ENCODE measurements at regions of chr10 and their contacts with region 1.

Region 1: GRCh38 chr10:66925896-66926715 is at the start of gene LRRTM3:
- DNase-seq: peak; percentile 70
- H3K4me3 ChIP-seq: no peak within 1 kb of the TSS
- H3K27ac ChIP-seq: no peak within 1 kb of the TSS
- H3K4me1 ChIP-seq: no peaks in the 10 kb centered on the region
- H3K27me3 ChIP-seq: peaks cover 17% of the 10 kb centered on the region
- CTCF ChIP-seq: peak; percentile 79
- total RNA-seq, gene LRRTM3: not detected

Region 2: GRCh38 chr10:66307826-66308225 is 618.3 kb before region 1 on chr10:
- CTCF ChIA-PET with region 1: no interaction called
- dilution Hi-C with region 1: no loop called
- in situ Hi-C with region 1: no loop called
- intact Hi-C with region 1: loop called (anchors 5 kb)
- DNase-seq: no peak
- H3K4me3 ChIP-seq: no peak overlapping the region
- H3K27ac ChIP-seq: no peak overlapping the region
- H3K4me1 ChIP-seq: no peaks in the 10 kb centered on the region
- H3K27me3 ChIP-seq: no peaks in the 10 kb centered on the region
- CTCF ChIP-seq: peak in 1 of 2 donors; percentile 26

Region 3: GRCh38 chr10:66455304-66455703 is 470.8 kb before region 1 on chr10:
- CTCF ChIA-PET with region 1: no interaction called
- dilution Hi-C with region 1: no loop called
- in situ Hi-C with region 1: no loop called
- intact Hi-C with region 1: loop called (anchors 5 kb)
- DNase-seq: peak; percentile 2
- H3K4me3 ChIP-seq: no peak overlapping the region
- H3K27ac ChIP-seq: no peak overlapping the region
- H3K4me1 ChIP-seq: no peaks in the 10 kb centered on the region
- H3K27me3 ChIP-seq: peaks cover 1% of the 10 kb centered on the region
- CTCF ChIP-seq: peak; percentile 30 to 63

Region 4: DNA sequence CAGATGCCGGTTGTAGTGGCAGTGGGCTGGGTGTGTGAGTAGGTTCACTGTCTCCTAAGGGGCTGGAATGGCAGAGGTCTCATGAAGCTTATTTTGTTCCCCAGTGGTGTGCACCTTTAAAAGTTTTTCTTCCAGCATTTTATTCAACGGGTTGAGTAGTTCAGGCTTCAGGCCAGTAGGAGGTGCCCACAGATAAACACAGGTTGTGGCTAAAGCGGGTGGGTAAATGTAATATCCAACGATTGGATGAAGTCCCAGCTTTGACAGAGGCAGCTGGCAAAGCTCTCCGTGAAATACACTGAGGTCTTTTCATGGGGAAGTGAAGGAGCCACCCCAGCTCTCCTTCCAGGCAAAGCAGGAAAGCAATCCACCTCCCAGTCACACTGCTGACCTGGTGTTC is 340.0 kb before region 1 on chr10:
- CTCF ChIA-PET with region 1: no interaction called
- dilution Hi-C with region 1: no loop called
- in situ Hi-C with region 1: no loop called
- intact Hi-C with region 1: loop called (anchors 2 kb)
- DNase-seq: peak; percentile 19
- H3K4me3 ChIP-seq: no peak overlapping the region
- H3K27ac ChIP-seq: no peak overlapping the region
- H3K4me1 ChIP-seq: no peaks in the 10 kb centered on the region
- H3K27me3 ChIP-seq: peaks cover 2% of the 10 kb centered on the region
- CTCF ChIP-seq: peak; percentile 48 to 55